Panc1 (cell line): ENCODE measurements at regions of chr5 and their contacts with region 1.

Region 1: DNA sequence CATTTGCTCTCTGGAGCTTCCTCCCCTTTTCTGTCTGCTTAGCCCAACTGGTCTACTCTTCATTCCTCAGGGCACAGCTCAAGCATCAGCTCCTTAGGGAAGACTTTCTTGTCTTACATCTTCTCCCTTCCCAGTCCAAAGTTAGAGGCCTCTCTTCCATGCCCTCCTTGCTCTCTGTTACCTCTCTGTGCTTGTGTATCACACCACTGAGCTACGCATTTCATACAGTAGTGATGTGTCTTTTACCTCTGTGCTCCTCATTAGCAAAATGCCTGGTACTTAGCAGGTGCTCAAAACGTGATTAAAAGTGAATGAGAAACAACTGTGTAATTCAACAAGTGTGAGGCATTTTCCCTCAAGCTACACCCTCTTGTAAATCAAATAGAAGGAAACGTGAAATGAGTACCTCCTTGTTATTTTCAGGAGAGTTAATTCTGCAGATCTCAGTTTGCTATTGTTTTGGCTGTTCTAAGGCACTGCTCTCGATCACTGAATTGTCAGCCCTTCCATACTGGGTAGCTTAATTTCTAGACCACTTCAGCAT is 39.0 kb downstream of the ERAP1 start:
- DNase-seq: no peak
- ATAC-seq: no peak
- H3K4me3 ChIP-seq: no peak overlapping the region
- H3K27ac ChIP-seq: no peak overlapping the region
- H3K4me1 ChIP-seq: no peaks in the 10 kb centered on the region
- H3K27me3 ChIP-seq: no peaks in the 10 kb centered on the region
- CTCF ChIP-seq: no peak

Region 2: GRCh38 chr5:96919754-96920197 is 151.0 kb after region 1 on chr5:
- CTCF ChIA-PET with region 1: no interaction called
- POLR2A ChIA-PET with region 1: interaction called, 12 read pairs
- in situ Hi-C with region 1: no loop called
- intact Hi-C with region 1: no loop called
- DNase-seq: no peak
- ATAC-seq: no peak
- H3K4me3 ChIP-seq: no peak overlapping the region
- H3K27ac ChIP-seq: no peak overlapping the region
- H3K4me1 ChIP-seq: peaks cover 12% of the 10 kb centered on the region
- H3K27me3 ChIP-seq: no peaks in the 10 kb centered on the region
- CTCF ChIP-seq: no peak